Mammary epithelial cell (primary cell): ENCODE measurements at regions of chr3 and their contacts with region 1.

Region 1: DNA sequence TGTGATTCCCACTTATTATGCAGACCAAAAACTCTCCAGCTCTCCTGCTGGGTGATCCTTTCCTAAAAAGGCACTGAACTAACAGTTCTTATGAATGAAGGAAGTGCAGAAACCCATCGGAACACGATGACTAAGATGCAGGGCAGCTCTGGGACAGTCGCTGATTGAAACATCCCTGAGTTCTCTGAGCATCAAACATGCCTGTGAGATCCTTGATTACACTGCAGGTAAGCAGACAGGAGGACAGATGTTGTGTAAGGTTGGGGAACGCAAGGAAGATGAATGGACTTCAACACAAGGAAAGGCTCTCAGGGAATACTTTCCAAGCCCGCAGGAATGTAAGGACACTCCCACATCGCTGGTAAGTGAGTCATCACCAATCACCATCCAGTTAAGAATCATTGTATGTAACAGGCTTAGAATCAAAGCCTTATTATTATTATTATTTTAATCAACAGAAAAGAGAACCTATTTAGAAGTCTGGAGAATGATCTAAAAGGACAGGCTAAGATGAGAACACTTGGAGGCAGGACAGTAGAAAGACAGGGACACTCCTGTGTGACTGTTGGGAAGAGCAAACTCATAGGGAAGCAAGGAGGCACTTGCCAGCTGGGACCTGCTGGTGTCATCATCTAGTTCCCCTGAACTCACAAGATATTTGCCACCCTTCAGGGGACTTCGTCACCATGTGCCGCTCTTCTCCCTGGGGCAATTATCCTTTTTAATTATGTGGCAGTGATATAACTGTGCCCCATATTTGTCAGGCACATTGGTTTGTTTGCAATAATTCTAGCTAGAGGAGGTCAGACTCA is 26.0 kb downstream of the TMEM158 start:
- DNase-seq: peak; percentile 99
- H3K4me3 ChIP-seq: no peak overlapping the region
- H3K27ac ChIP-seq: peak overlapping the region; percentile 90
- H3K4me1 ChIP-seq: peaks cover 40% of the 10 kb centered on the region
- H3K27me3 ChIP-seq: no peaks in the 10 kb centered on the region
- CTCF ChIP-seq: no peak

Region 2: DNA sequence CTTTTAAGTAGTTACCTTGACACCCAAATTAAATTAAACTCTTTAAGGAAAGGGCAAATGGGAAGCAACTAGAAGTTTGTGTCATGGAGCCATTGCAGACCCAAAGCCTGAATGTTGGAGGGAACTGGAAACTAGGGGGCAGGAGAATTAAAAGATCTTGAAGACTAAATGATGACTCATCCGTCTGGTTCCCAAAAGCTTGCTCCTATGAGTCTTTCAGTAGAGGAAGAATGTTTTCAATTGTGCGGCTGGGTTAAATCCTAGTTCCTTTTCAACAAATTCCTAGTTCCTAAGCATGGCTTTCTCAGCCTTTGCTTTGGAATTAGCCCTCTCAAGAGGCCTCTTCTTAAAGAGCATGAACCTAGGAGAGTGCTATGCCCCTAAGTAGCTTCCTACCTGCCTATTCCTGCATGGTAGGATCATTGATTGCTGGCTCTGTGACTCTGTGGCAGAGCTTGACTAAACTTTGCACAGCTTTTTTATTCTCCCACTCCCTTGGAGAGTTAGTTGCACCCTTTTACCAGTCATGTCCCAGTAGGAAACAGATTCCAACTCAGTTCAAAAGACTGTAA is 156.2 kb before region 1 on chr3:
- CTCF ChIA-PET with region 1: no interaction called
- dilution Hi-C with region 1: no loop called
- in situ Hi-C with region 1: loop called in 1 of 2 experiments (anchors 5 kb)
- intact Hi-C with region 1: no loop called
- DNase-seq: peak; percentile 68
- H3K4me3 ChIP-seq: no peak overlapping the region
- H3K27ac ChIP-seq: no peak overlapping the region
- H3K4me1 ChIP-seq: peaks cover 13% of the 10 kb centered on the region
- H3K27me3 ChIP-seq: no peaks in the 10 kb centered on the region
- CTCF ChIP-seq: peak in 1 of 2 donors; percentile 19

Region 3: DNA sequence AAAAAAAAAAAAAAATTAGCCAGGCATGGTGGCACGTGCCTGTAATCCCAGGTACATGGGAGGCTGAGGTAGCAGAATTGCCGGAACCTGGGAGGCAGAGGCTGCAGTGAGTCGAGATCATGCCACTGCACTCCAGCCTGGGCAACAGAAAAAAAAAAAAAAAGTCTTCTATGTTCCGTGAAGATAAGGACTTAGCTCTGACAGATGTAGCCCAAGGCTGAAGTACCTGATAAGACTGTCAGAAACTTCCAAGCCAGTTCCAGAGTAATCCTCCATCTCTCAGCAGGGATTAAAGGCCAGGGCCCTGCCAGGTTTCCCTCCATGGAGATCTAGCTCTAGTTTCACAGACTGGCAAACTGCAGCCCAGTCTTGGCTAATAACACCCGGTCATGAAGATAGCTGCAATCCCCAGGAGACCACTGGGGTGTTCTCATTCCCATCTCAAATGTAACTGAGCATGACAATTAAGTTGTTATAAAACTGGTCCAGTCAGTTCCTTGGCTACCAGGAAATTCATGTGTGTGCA is 62.3 kb before region 1 on chr3:
- CTCF ChIA-PET with region 1: no interaction called
- dilution Hi-C with region 1: no loop called
- in situ Hi-C with region 1: loop called (anchors 5 to 10 kb)
- intact Hi-C with region 1: loop called (anchors 1 kb)
- DNase-seq: no peak
- H3K4me3 ChIP-seq: no peak overlapping the region
- H3K27ac ChIP-seq: peak overlapping the region; percentile 82
- H3K4me1 ChIP-seq: peaks cover 89% of the 10 kb centered on the region
- H3K27me3 ChIP-seq: no peaks in the 10 kb centered on the region
- CTCF ChIP-seq: no peak

Region 4: DNA sequence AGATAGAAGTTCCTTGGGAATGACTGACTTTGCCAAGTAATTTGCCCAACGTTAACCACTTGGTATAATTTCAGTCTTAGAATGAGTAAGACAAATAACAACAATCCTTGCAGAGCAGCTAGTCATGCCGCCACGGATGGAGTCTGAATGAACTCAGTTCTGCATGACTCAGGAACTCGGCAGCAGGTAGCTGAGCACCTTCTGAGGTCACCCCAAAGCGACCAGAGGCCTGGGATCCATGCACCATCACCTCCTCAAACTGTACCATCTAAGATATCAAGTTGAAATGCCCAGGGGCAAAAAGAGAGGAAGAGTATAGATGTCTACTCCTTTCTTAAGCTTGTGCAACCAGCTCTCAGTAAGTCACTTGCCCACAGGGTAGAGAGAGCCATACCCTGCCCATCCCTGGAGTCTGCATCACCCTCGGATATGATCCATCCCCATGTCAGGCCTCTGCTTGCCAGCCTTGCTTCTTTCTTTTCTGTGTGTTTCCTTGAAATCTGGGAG is 45.3 kb before region 1 on chr3:
- CTCF ChIA-PET with region 1: no interaction called
- dilution Hi-C with region 1: no loop called
- in situ Hi-C with region 1: no loop called
- intact Hi-C with region 1: loop called (anchors 1 kb)
- DNase-seq: peak; percentile 95
- H3K4me3 ChIP-seq: no peak overlapping the region
- H3K27ac ChIP-seq: peak overlapping the region; percentile 50
- H3K4me1 ChIP-seq: peaks cover 23% of the 10 kb centered on the region
- H3K27me3 ChIP-seq: no peaks in the 10 kb centered on the region
- CTCF ChIP-seq: no peak

Region 5: DNA sequence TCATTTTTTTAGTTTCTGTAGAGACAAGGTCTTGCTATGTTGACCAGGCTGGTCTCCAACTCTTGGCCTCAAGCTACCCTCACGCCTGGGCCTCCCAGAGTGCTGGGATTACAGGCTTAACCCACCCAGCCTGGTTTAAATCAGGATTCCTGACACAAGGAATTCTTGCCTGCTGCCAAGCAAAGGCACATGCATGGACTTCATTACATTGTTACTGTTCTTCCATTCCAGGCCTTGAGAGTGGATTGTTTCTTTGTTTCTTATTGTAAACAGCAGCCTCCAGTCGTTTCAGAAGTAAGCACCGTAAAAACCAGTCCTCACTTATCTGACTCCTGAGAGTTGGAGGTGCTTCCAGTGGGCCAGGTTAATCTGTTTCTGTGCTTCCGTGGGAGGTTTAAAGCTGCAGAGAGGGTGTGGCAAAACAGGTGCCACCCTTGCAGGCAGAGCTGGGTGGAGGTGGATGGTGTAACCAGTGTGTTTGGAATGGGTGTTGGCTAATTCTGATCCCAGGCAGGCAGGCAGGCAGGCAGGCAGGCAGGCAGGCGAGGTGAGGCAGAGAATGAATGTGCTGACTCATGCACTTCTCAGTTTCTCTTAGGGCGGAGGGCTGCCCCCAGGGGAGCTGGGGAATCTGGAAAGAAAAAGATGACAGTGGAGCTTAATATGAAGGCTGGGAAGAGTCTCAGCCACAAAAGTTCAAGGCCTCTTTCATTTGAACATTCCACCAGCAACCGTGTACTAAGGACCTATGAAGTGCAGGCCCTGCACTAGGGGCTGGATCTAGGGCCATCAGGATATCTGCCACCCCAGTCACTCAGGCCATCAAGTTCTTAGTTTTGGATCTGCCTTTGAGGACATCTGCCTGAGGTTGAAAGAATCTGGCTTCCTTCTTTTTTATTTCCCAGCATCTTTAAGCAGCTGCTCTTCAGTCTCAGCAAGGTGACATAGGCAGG is 16.9 kb before region 1 on chr3:
- CTCF ChIA-PET with region 1: no interaction called
- dilution Hi-C with region 1: no loop called
- in situ Hi-C with region 1: no loop called
- intact Hi-C with region 1: loop called (anchors 1 kb)
- DNase-seq: peak; percentile 95
- H3K4me3 ChIP-seq: no peak overlapping the region
- H3K27ac ChIP-seq: peak overlapping the region; percentile 61
- H3K4me1 ChIP-seq: peaks cover 40% of the 10 kb centered on the region
- H3K27me3 ChIP-seq: no peaks in the 10 kb centered on the region
- CTCF ChIP-seq: no peak

Region 6: GRCh38 chr3:45426161-45426560 is 226.1 kb after region 1 on chr3:
- CTCF ChIA-PET with region 1: no interaction called
- dilution Hi-C with region 1: no loop called
- in situ Hi-C with region 1: no loop called
- intact Hi-C with region 1: no loop called
- DNase-seq: no peak
- H3K4me3 ChIP-seq: no peak overlapping the region
- H3K27ac ChIP-seq: no peak overlapping the region
- H3K4me1 ChIP-seq: no peaks in the 10 kb centered on the region
- H3K27me3 ChIP-seq: no peaks in the 10 kb centered on the region
- CTCF ChIP-seq: no peak